Activated CD4-positive, alpha-beta memory T cell treated with anti-CD3 and anti-CD28 coated beads, Interleukin-2, amount 10 ng/mL, durations not matched to agents 7 days and 5 days (primary cell): ENCODE measurements at regions of chr7 and their contacts with region 1.

Region 1: DNA sequence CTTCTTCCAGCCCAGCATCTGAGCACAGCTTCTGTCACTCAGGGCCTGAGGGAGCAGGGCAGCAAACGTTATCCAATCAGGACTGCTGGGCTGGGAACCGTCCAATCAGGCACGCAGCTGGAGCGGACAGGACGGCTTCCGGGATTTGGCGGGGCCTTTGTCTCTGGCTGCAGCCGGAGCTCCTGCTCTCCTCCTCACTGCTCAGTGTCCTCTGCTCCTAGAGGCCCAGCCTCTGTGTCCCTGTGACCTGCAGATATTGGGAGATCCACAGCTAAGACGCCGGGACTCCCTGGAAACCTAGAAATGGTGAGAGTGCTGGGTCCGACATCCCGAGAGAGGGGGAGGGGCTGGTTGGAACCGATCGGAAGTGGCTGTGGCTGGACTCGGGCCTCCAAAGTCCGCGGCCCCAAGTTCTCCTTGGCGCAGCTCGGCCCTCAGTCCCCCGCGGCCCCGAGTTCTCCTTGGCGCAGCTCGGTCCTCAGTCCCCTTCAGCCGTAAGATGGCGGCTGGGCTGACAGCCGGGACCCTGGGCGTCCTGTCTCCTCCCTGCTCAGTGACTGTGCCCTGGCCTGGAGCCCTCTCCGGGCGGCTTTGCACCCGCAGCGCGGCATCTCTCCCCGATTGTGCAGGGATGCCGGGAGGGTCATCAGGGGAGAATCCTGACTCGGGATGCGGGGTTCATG is at the start of gene ZNF107:
- DNase-seq: peak; percentile 91
- H3K4me3 Mint-ChIP-seq: peak within 1 kb of the TSS; percentile 95
- H3K27ac Mint-ChIP-seq: peak within 1 kb of the TSS; percentile 96
- H3K4me1 Mint-ChIP-seq: peaks cover 33% of the 10 kb centered on the region
- H3K27me3 Mint-ChIP-seq: no peaks in the 10 kb centered on the region
- total RNA-seq, gene ZNF107: 19.5 to 20.0 TPM

Region 2: DNA sequence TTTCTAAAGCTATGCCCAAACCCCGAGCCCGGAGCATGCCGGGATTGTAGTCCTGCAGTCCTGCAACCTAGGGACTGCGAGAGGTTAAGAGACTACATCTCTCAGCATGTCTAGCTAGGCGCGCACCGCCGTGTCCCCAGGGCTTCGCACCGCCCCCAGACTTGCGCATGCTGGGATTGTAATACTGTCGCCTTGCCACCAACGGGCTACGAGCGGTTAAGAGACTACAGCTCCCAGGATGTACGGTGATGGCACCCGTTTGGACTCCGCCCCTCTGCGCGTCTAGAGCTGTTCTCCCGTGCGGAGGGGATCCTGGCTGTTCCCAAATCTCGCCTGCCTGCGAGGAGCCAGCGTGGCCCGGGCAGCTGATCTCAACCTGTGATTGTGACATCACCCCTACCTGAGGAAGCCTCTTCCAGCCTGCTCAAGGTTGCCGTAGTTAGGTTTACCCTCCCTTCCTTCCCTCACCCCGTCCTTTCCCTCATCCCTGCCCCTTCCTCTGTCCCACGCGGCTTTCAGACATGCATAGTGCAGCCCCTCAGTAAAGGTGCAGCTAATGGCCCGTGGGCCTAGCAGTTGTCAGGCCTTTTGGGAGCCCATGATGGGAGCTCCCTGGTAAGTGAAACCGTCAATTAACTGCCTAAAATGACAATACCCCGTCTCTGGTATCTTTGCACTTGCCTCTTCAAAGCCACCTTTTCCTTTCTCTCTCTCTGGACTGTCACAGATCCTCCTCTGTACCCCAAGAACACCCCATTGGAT is 358.7 kb before region 1 on chr7:
- CTCF ChIA-PET with region 1: no interaction called
- POLR2A ChIA-PET with region 1: interaction called, 10 read pairs
- DNase-seq: peak; percentile 95
- H3K4me3 Mint-ChIP-seq: peak overlapping the region; percentile 93
- H3K27ac Mint-ChIP-seq: peak overlapping the region; percentile 85
- H3K4me1 Mint-ChIP-seq: peaks cover 19% of the 10 kb centered on the region
- H3K27me3 Mint-ChIP-seq: no peaks in the 10 kb centered on the region

Region 3: DNA sequence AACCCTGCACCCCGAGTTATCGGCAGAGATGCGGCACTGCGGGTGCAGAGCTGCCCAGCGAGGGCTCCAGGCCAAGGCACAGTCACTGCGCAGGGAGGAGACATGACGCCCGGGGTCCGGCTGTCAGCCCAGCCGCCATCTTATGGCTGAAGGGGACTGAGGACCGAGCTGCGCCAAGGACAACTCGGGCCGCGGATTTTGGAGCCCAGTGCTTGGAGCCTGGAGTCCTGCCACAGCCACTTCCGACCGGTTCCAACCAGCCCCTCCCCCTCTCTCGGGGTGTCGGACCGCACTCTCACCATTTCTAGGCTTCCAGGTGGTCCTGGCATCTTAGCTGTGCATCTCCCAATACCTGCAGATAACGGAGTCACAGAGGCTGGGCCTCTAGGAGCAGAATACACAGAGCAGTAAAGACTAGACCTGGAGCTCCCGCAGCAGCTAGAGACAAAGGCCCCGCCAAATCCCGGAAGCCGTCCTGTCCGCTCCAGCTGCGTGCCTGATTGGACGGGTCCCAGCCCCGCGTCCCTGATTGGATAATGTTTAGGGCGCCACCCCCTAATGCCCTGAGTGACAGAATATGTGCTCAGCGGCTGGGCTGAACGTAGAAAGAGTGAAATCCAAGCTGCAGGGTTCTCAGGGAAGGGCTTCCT is 103.4 kb before region 1 on chr7 and contains the start of gene ZNF680:
- CTCF ChIA-PET with region 1: no interaction called
- POLR2A ChIA-PET with region 1: interaction called, 31 read pairs
- DNase-seq: peak; percentile 92
- H3K4me3 Mint-ChIP-seq: peak within 1 kb of the TSS; percentile 99
- H3K27ac Mint-ChIP-seq: peak within 1 kb of the TSS; percentile 94
- H3K4me1 Mint-ChIP-seq: peaks cover 20% of the 10 kb centered on the region
- H3K27me3 Mint-ChIP-seq: no peaks in the 10 kb centered on the region
- total RNA-seq, gene ZNF680: 12.8 to 13.0 TPM

Region 4: GRCh38 chr7:64902806-64903721 is 236.9 kb after region 1 on chr7 and contains the start of gene ZNF273:
- CTCF ChIA-PET with region 1: interaction called, 3 read pairs
- POLR2A ChIA-PET with region 1: interaction called, 36 read pairs
- DNase-seq: peak; percentile 94
- H3K4me3 Mint-ChIP-seq: peak within 1 kb of the TSS; percentile 94
- H3K27ac Mint-ChIP-seq: peak within 1 kb of the TSS; percentile 92
- H3K4me1 Mint-ChIP-seq: peaks cover 46% of the 10 kb centered on the region
- H3K27me3 Mint-ChIP-seq: no peaks in the 10 kb centered on the region
- total RNA-seq, gene ZNF273: 8.4 to 10.5 TPM

Region 5: DNA sequence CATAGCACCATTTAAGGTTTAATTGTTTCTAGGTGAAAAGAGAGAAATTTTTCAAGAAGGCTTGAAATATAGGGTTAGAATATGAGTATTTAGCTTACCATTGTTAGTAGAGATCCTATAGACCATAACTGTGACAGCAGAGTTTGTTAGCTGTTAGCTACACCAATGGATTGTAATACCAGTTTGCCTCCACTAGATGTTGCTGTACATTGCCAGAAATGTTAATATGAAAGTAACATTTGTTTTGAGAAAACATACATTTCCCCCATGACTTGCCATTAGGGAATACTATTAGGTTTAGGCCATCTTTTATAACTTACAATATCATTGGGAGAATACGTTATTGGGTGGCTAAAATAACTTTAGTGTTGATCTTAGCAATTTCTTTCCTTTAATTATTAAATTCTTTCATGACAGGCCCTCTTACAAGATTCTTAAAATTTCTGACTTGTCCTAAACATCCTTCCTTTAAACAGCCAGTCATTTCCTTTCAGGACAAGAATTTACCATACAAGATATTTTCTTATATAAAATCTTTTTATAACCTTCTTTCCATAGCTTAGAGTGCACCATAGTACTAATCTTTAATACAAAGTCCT is 285.2 kb after region 1 on chr7:
- CTCF ChIA-PET with region 1: no interaction called
- POLR2A ChIA-PET with region 1: no interaction called
- DNase-seq: no peak
- H3K4me3 Mint-ChIP-seq: no peak overlapping the region
- H3K27ac Mint-ChIP-seq: no peak overlapping the region
- H3K4me1 Mint-ChIP-seq: peaks cover 1% of the 10 kb centered on the region
- H3K27me3 Mint-ChIP-seq: peaks cover 29% of the 10 kb centered on the region

Region 6: GRCh38 chr7:65373608-65374351 is 707.7 kb after region 1 on chr7 and contains the start of gene ZNF92:
- CTCF ChIA-PET with region 1: no interaction called
- POLR2A ChIA-PET with region 1: interaction called, 10 read pairs
- DNase-seq: peak; percentile 98
- H3K4me3 Mint-ChIP-seq: peak within 1 kb of the TSS; percentile 87
- H3K27ac Mint-ChIP-seq: peak within 1 kb of the TSS; percentile 92
- H3K4me1 Mint-ChIP-seq: peaks cover 41% of the 10 kb centered on the region
- H3K27me3 Mint-ChIP-seq: no peaks in the 10 kb centered on the region
- total RNA-seq, gene ZNF92: 19.7 to 21.6 TPM